ENCODE measurements at regions of chr7 and their contacts with region 1.

Region 1: DNA sequence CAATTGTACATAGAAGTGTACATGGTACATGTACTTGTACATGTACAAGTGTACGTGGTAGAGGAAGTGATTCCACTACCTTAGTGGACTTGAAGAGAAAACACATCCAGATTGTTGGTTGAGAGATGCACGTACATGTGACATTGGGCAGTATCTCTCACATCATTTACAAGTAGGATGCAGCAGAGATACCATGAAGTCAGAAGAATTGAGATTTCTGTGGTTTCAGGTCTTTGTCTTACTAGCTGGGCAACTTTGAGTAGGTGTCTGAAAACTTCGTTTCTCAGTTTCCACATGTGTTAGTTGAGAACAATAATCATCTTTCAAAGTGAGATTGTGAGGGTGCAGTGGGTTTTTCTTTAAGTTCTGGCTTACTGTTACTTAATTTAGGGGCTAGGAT is 21.5 kb downstream of the CLDN12 start:
- DNase-seq: no peak
- ATAC-seq: no peak
- H3K4me3 ChIP-seq: no peak overlapping the region
- H3K27ac ChIP-seq: no peak overlapping the region
- H3K4me1 ChIP-seq: peaks cover 0 to 5% of the 10 kb centered on the region in 2 experiments; a peak in 1 of 4 replicates
- H3K27me3 ChIP-seq: no peaks in the 10 kb centered on the region
- CTCF ChIP-seq: no peak
- POLR2A ChIP-seq: no peak
- RAD21 ChIP-seq: no peak

Region 2: DNA sequence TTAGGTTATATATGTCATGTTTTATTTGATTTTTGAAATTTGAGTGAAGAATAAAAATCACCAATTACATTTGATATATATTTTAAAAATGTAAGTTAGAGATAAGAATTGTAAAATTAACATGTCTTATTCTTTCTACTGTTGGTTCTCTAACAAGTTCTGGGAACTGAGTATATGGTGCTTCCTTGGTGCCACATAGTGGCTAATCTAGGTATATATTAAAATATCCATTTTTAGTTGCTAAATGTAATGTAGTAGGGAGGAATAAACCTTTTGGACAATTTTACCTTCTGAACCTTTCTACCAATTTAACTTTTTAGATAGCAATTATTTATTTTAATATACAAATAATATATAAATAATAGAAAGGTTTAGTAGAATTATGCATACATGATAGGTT is 162.3 kb before region 1 on chr7:
- CTCF ChIA-PET with region 1: interaction called, 5 read pairs
- POLR2A ChIA-PET with region 1: no interaction called
- RAD21 ChIA-PET with region 1: no interaction called
- intact Hi-C with region 1: loop called (anchors 5 kb)
- DNase-seq: peak; percentile 15
- ATAC-seq: peak; percentile 79
- H3K4me3 ChIP-seq: no peak overlapping the region
- H3K27ac ChIP-seq: no peak overlapping the region
- H3K4me1 ChIP-seq: no peaks in the 10 kb centered on the region
- H3K27me3 ChIP-seq: no peaks in the 10 kb centered on the region
- CTCF ChIP-seq: peak; percentile 35 to 85 (median 50); a peak in 5 of 6 replicates
- POLR2A ChIP-seq: no peak
- RAD21 ChIP-seq: peak; percentile 84

Region 3: DNA sequence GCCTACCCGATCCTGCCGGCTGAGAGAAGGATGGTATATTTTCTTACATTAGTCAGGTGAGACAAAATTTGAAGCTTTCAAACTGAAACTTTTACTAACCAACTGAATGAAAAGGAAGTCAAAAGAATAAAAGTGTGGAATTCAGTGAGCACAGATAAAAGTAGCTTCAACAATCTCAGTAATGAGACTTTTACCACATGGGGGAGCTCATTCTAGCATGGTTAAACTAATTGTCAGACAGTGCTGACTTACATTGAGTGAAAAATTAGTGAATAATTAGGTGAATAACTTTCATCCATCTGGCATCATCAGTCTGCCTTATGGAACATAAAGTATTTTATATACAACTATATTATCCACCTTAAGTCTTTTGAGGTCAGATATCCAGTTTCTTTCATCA is 112.0 kb before region 1 on chr7:
- CTCF ChIA-PET with region 1: interaction called, 20 read pairs
- POLR2A ChIA-PET with region 1: no interaction called
- RAD21 ChIA-PET with region 1: interaction called, 3 to 8 read pairs
- intact Hi-C with region 1: loop called (anchors 5 kb)
- DNase-seq: no peak
- ATAC-seq: peak; percentile 58; the same call in 1 of the 2 replicates
- H3K4me3 ChIP-seq: no peak overlapping the region
- H3K27ac ChIP-seq: no peak overlapping the region
- H3K4me1 ChIP-seq: no peaks in the 10 kb centered on the region
- H3K27me3 ChIP-seq: no peaks in the 10 kb centered on the region
- CTCF ChIP-seq: peak; percentile 28 to 42 (median 35); a peak in 3 of 6 replicates
- POLR2A ChIP-seq: no peak
- RAD21 ChIP-seq: peak; percentile 29; the same call in 1 of the 2 replicates

Region 4: GRCh38 chr7:90412458-90413184 is 12.1 kb before region 1 on chr7:
- CTCF ChIA-PET with region 1: interaction called, 11 read pairs
- POLR2A ChIA-PET with region 1: no interaction called
- RAD21 ChIA-PET with region 1: no interaction called
- intact Hi-C with region 1: no loop called
- DNase-seq: peak; percentile 15
- ATAC-seq: peak; percentile 90
- H3K4me3 ChIP-seq: no peak overlapping the region
- H3K27ac ChIP-seq: no peak overlapping the region
- H3K4me1 ChIP-seq: peaks cover 0 to 13% of the 10 kb centered on the region in 2 experiments; a peak in 2 of 4 replicates
- H3K27me3 ChIP-seq: no peaks in the 10 kb centered on the region
- CTCF ChIP-seq: peak; percentile 47 to 63 (median 62); a peak in 5 of 6 replicates
- POLR2A ChIP-seq: no peak
- RAD21 ChIP-seq: peak; percentile 57

Region 5: DNA sequence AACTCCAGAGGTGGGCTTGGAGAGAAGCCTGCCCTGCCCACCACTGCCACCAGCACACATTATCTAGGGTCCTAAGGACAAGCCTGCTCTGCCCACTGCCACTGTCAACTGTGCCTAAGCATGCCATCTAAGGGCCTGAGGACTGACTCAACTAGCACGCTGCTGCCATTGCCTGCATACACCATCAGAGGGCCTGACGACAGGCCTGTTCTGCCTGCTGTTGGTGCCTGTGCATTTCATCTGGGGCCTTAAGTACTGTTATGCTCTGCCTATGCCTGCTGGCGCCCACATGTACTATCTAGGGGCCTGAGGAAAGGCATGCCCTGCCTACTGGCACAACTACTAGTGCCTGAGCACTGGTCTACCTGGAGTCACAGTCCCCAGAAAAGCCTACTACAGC is 1781.3 kb after region 1 on chr7:
- CTCF ChIA-PET with region 1: no interaction called
- POLR2A ChIA-PET with region 1: no interaction called
- RAD21 ChIA-PET with region 1: no interaction called
- intact Hi-C with region 1: no loop called
- DNase-seq: no peak
- ATAC-seq: peak; percentile 47; the same call in 1 of the 2 replicates
- H3K4me3 ChIP-seq: no peak overlapping the region
- H3K27ac ChIP-seq: no peak overlapping the region
- H3K4me1 ChIP-seq: no peaks in the 10 kb centered on the region
- H3K27me3 ChIP-seq: no peaks in the 10 kb centered on the region
- CTCF ChIP-seq: no peak
- POLR2A ChIP-seq: no peak
- RAD21 ChIP-seq: no peak